Stomach (tissue), 19 donors: ENCODE measurements at regions of chr12 and their contacts with region 1.

Region 1: GRCh38 chr12:1795785-1796514 is 24.4 kb upstream of the LRTM2 start:
- DNase-seq: peak; percentile 95 to 97
- H3K4me3 ChIP-seq: peak overlapping the region; percentile 58 to 74 (median 66)
- H3K27ac ChIP-seq: peak overlapping the region; percentile 81 to 92 (median 90)
- H3K4me1 ChIP-seq: peaks cover 18 to 39% (median 33%) of the 10 kb centered on the region in 4 donors
- H3K27me3 ChIP-seq: no peaks in the 10 kb centered on the region
- CTCF ChIP-seq: peak in 5 of 7 experiments; percentile 75 to 99 (median 97)
- EP300 ChIP-seq: no peak
- POLR2A ChIP-seq: peak in 1 of 4 donors; percentile 25

Region 2: DNA sequence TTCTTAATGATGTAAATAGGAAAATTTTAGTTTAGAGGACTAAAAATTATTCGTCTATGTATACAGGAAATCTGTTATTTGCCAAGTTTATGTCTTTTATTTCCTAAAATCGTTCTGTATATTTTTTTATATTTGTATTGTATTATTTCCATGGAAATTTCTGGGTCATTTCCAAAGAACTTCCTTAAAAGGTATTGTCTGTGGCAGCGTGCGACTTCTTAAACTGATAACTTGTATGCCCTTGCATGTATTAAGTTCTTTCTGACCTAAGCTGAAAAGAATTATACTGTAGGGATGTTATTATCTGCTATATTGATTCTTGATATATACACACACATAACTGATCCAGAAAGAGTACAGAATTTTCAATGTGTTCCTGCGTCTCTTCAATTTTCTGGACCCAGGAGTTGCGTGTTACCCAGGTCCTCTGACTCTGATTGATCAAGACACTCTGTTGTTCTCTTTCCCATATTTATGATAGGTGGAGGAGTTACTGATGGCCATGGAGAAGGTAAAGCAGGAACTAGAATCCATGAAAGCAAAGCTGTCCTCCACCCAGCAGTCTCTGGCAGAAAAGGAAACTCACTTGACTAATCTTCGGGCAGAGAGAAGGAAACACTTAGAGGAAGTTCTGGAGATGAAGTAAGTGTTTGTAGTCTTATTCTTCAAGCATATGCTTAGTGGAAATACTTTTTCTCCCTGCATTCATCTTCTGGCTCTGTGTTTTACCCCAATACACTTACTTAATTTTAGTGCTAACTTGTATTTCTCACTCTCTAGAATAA is 506.4 kb before region 1 on chr12:
- intact Hi-C with region 1: no loop called
- DNase-seq: peak in 1 of 2 donors; percentile 17
- H3K4me3 ChIP-seq: no peak overlapping the region
- H3K27ac ChIP-seq: no peak overlapping the region
- H3K4me1 ChIP-seq: peaks cover 0 to 14% (median 1%) of the 10 kb centered on the region in 4 donors
- H3K27me3 ChIP-seq: no peaks in the 10 kb centered on the region
- CTCF ChIP-seq: no peak
- EP300 ChIP-seq: no peak
- POLR2A ChIP-seq: no peak

Region 3: DNA sequence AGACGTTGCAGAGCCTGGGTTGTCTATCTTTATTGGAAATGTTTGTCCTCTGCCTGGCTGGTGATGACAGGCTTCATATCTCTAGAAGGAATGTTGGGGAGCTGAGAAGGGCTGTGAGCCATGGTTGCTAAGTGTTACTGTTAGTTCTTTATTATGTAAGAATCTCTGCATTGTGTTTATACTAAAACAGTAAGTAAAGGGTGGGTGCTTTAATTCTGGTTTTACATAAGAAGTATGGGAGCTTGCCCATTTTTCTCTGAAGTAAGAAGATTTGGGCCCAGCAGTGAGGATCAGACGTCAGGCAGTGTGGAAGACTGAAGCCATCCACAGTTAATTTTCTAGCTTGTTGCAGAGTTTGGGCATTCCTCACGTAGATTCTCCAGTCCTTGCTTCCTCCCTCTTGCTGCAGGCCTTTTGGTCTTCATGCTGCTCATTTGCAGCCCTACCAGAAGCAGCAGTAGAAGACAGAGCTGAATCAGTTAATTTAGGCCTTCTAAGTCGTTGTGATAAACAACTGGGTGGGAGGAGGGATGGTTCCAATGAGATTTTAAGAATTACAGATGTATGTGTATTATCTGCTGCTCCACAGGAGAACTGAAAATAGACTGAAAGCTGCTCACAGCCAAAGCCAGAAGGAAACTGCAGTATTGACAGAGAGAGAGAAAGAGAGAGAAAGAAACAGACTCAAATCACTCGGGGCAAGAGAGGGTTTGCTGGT is 145.5 kb before region 1 on chr12:
- intact Hi-C with region 1: loop called (anchors 5 kb)
- DNase-seq: no peak
- H3K4me3 ChIP-seq: no peak overlapping the region
- H3K27ac ChIP-seq: peak overlapping the region in 2 of 5 donors; percentile 34 to 56
- H3K4me1 ChIP-seq: peaks cover 0 to 39% (median 18%) of the 10 kb centered on the region in 4 donors
- H3K27me3 ChIP-seq: no peaks in the 10 kb centered on the region
- CTCF ChIP-seq: no peak
- EP300 ChIP-seq: no peak
- POLR2A ChIP-seq: no peak

Region 4: GRCh38 chr12:1939801-1940607 is 144.1 kb after region 1 on chr12:
- intact Hi-C with region 1: loop called (anchors 5 kb)
- DNase-seq: peak; percentile 91 to 94
- H3K4me3 ChIP-seq: no peak overlapping the region
- H3K27ac ChIP-seq: peak overlapping the region in 2 of 5 donors; percentile 46 to 86
- H3K4me1 ChIP-seq: peaks cover 28 to 48% (median 40%) of the 10 kb centered on the region in 4 donors
- H3K27me3 ChIP-seq: no peaks in the 10 kb centered on the region
- CTCF ChIP-seq: peak in 6 of 7 experiments; percentile 73 to 98 (median 96)
- EP300 ChIP-seq: no peak
- POLR2A ChIP-seq: no peak

Region 5: DNA sequence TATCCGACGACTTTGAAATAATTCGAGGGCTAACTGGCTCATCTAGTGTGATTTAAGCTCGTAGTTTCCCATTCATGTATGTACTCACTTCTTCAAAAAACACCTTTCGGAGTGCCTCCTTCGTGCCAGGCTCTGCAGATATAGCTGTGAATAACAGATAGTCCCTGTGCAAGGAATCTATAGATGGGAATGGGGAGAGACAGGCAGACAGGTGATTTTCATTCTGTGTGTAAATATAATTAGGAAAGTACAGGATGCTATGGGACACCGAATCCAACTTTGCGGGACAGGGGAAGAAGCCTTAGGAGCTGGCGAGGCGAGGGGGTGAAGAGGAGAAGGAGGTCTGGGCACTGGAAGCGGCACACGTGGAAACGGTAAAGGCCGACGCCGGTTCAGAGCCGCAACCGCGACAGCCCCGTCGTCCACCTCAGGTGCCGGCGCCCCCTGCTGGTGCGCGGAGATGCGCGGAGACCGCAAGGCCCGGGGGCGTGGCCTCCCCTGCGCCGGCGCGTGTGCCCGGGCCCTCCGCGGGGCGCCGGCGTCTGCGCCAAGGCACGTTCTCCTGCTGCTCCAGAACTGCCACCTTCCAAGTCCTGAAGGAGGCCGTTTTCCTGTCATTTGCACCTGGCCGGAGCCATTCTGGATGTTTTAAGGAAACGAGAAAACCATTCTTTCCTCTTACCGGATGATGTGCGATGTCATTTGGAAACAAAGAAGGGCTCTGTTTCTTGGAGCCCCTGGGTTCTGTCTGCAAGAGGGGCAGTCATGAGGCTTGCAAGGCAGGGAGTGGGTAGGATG is 238.9 kb after region 1 on chr12:
- intact Hi-C with region 1: loop called (anchors 10 kb)
- DNase-seq: peak; percentile 90 to 96
- H3K4me3 ChIP-seq: peak overlapping the region in 3 of 4 donors; percentile 31 to 34 (median 33)
- H3K27ac ChIP-seq: peak overlapping the region in 1 of 5 donors; percentile 12
- H3K4me1 ChIP-seq: peaks cover 5 to 16% (median 10%) of the 10 kb centered on the region in 4 donors
- H3K27me3 ChIP-seq: peaks cover 0 to 20% (median 7%) of the 10 kb centered on the region in 3 donors
- CTCF ChIP-seq: peak in 5 of 7 experiments; percentile 46 to 94 (median 93)
- EP300 ChIP-seq: no peak
- POLR2A ChIP-seq: no peak